ENCODE measurements at regions of chr3 and their contacts with region 1.

Region 1: DNA sequence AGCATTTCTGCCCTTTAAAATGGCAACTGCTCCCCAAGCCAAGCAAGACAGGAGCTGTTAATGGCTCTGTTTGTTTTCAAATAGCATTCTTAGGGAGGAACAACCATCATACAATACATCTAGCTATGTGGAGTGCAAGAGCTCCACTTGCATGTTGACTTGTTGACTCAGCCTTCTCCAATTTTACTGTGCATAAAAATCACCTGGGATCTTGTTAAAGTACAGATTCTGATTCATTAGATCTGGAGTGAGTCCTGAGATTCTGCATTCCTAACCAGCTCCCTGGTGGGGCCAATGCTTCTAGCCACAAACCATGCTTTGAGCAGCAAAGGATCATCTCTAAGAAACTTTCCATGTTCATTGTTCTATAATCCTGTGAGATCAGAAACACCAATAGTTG is 171.4 kb downstream of the THRB start:
- DNase-seq: no peak
- H3K4me3 ChIP-seq: no peak overlapping the region
- H3K27ac ChIP-seq: no peak overlapping the region
- H3K4me1 ChIP-seq: no peaks in the 10 kb centered on the region
- H3K27me3 ChIP-seq: no peaks in the 10 kb centered on the region
- CTCF ChIP-seq: no peak
- EP300 ChIP-seq: no peak
- POLR2A ChIP-seq: no peak

Region 2: DNA sequence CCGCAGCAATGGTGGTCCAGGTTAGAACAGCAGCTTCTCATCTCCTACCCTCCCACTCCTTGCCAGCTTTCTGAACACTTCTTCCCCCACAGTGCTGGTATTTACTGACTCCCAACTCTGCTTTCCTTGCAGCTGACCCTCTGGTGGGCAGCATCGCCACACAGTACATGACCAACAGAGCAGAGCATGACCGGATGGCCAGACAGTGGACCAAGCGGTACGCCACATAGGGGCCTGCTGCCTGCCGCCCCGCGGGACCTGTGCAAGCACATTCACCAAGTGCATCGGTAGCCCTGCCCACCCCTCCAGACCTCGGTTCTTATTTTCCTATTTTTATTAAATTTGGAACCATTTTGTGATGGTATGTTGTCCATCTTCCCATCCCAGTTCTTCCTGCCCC is 733.7 kb before region 1 on chr3:
- intact Hi-C with region 1: loop called in 1 of 4 experiments (anchors 5 kb)
- DNase-seq: no peak
- H3K4me3 ChIP-seq: no peak overlapping the region
- H3K27ac ChIP-seq: no peak overlapping the region
- H3K4me1 ChIP-seq: peaks cover 2% of the 10 kb centered on the region
- H3K27me3 ChIP-seq: no peaks in the 10 kb centered on the region
- CTCF ChIP-seq: no peak
- EP300 ChIP-seq: no peak
- POLR2A ChIP-seq: no peak

Region 3: GRCh38 chr3:24220859-24221657 is 102.2 kb before region 1 on chr3:
- intact Hi-C with region 1: no loop called
- DNase-seq: peak in 1 of 5 donors; percentile 38
- H3K4me3 ChIP-seq: no peak overlapping the region
- H3K27ac ChIP-seq: no peak overlapping the region
- H3K4me1 ChIP-seq: peaks cover 4% of the 10 kb centered on the region
- H3K27me3 ChIP-seq: no peaks in the 10 kb centered on the region
- CTCF ChIP-seq: no peak
- EP300 ChIP-seq: no peak
- POLR2A ChIP-seq: no peak

Region 4: GRCh38 chr3:24640330-24640877 is 317.1 kb after region 1 on chr3:
- intact Hi-C with region 1: no loop called
- DNase-seq: no peak
- H3K4me3 ChIP-seq: no peak overlapping the region
- H3K27ac ChIP-seq: no peak overlapping the region
- H3K4me1 ChIP-seq: peaks cover 1% of the 10 kb centered on the region
- H3K27me3 ChIP-seq: no peaks in the 10 kb centered on the region
- CTCF ChIP-seq: no peak
- EP300 ChIP-seq: no peak
- POLR2A ChIP-seq: no peak